ENCODE measurements at regions of chr3 and their contacts with region 1.

Region 1: GRCh38 chr3:187954516-187955075 is 199.4 kb upstream of the LPP start:
- DNase-seq: no peak
- ATAC-seq: peak; percentile 27 to 48 (median 38)
- H3K4me3 ChIP-seq: peak overlapping the region; percentile 4
- H3K27ac ChIP-seq: peak overlapping the region; percentile 93
- H3K4me1 ChIP-seq: peaks cover 52% of the 10 kb centered on the region
- H3K27me3 ChIP-seq: no peaks in the 10 kb centered on the region
- CTCF ChIP-seq: no peak

Region 2: DNA sequence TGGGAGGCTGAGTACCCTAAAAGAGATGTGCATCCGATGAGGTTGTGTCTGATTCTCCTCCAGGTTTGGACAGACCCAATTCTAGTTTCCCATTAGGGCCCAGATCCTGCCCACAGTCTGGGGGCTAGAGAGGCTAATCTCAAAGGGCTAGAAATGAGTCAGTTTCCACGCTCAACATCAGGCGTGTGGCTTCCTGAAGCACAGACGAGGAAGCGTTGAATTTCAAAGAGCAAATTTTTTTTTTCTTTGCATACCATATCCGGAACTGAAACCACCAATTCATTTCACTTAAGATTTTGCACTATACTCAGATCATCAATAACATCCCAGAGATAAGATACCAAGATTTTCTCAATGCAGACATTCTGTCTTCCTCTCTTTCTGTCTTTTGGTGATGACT is 35.5 kb before region 1 on chr3:
- intact Hi-C with region 1: loop called in 1 of 2 experiments (anchors 5 kb)
- DNase-seq: no peak
- ATAC-seq: no peak
- H3K4me3 ChIP-seq: no peak overlapping the region
- H3K27ac ChIP-seq: no peak overlapping the region
- H3K4me1 ChIP-seq: peaks cover 38% of the 10 kb centered on the region
- H3K27me3 ChIP-seq: no peaks in the 10 kb centered on the region
- CTCF ChIP-seq: no peak